Activated T-helper 2 cell treated with anti-CD3 and anti-CD28 coated beads, Interferon-gamma antibody, Interleukin-2, Interleukin-4, amounts not matched to agents 10 μg/mL and 5 μg/mL and 100 μg/mL, durations not matched to agents 14 hours and 24 hours and 36 hours (primary cell): ENCODE measurements at regions of chr14 and their contacts with region 1.

Region 1: GRCh38 chr14:24634158-24634557 is at the start of gene GZMB:
- DNase-seq: peak; percentile 59
- H3K4me3 Mint-ChIP-seq: peak within 1 kb of the TSS; percentile 95
- H3K27ac Mint-ChIP-seq: peak within 1 kb of the TSS; percentile 93
- H3K4me1 Mint-ChIP-seq: peaks cover 75% of the 10 kb centered on the region
- H3K27me3 Mint-ChIP-seq: no peaks in the 10 kb centered on the region
- total RNA-seq, gene GZMB: 4,664 and 4,741 TPM in 2 replicates

Region 2: DNA sequence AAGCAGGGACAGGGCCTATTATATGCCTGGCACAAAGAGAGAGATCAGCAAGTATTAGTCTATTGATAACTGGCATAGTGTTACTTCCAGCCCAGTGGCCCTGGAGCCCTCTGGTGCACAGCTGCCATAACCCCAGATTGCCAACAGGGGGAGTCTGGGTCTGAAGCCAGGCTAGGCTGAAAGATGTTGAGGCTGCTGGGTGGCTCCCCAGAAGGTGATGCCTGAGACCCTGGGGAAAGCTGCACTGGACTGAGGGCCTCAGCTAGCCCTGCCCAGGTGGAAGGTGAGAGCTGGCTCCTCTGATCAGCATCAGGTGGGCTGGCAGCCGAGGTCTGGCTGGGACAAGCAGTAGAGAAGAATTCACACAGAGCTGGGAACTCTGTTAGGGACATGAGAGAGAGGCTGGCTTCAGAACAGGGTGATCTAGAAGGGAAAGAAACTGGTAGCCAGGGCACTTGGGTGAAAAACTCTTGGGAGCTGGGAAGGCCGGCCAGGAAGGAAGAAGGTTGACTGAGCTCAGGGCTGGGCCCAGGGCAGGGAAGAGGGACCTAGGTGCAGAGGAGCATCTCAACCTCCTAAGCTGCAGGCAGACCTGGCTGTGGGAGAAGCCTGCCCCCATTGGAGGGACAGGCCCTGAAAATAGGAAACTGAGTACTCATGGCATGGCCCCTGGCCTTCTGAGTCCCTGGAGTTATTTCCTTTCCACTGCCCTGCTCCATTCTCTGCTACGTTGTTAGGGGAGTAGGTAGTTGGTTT is 28.5 kb before region 1 on chr14:
- intact Hi-C with region 1: loop called (anchors 2 kb)
- DNase-seq: peak; percentile 63
- H3K4me3 Mint-ChIP-seq: peak overlapping the region; percentile 74
- H3K27ac Mint-ChIP-seq: peak overlapping the region; percentile 88
- H3K4me1 Mint-ChIP-seq: peaks cover 49% of the 10 kb centered on the region
- H3K27me3 Mint-ChIP-seq: peaks cover 1% of the 10 kb centered on the region

Region 3: DNA sequence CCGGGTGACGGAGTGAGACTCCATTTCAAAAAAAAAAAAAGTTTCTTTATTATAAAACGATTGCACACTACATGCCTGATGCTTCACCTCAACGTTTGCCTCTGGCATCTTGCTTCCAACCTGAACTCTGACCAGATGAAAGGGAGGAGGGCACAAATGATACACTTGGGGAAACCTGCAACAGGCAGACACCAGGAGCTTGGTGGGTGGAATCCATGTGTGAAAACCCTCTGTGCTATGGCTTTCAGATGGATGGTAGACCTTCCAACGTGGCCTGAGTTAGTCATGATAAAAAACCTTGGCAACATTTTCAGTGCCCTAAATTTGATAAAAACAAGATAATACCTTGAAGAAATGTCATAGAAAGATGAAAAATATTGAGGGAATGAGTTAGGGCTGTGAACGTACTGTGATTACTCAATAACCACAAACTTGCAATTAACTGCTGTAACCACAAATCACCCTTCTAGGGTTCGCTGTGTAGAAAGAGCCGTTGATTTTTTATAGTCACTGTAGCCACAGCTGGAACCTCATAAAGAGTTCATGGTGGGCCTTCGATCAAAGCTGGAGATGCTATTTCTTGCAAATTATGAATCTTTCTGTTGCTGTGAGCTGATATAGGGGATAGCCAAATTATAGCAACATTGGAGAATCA is 25.9 kb after region 1 on chr14:
- intact Hi-C with region 1: loop called (anchors 1 kb)
- DNase-seq: no peak
- H3K4me3 Mint-ChIP-seq: peak overlapping the region; percentile 69
- H3K27ac Mint-ChIP-seq: peak overlapping the region; percentile 90
- H3K4me1 Mint-ChIP-seq: peaks cover 68% of the 10 kb centered on the region
- H3K27me3 Mint-ChIP-seq: no peaks in the 10 kb centered on the region

Region 4: DNA sequence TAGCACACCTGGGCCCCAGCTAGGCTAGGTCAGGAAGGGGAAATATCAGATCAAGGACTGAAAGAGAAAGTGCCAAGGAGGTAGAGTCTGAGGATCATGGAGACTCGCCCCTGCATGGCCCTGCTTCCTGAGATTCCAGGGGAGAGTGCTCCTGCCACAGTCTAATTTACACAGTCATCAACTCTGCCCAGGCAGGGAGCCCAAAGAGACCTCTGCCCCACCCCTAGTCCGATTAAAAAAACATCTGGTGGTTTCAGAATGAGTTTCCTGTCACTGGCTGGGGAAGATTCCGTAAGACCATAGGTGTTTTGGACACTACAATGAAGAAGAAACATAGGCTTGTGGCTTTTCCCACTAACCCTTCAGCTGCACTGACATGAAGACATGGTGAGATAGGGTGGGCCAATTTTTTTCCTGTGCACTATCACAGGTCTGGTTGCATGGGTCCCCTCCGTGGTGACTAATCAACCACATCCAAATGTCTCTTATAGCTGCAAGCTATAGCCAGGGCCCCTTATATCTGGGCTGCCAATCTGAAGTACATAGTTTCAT is 31.4 kb after region 1 on chr14:
- intact Hi-C with region 1: loop called (anchors 1 kb)
- DNase-seq: peak; percentile 52
- H3K4me3 Mint-ChIP-seq: peak overlapping the region; percentile 59
- H3K27ac Mint-ChIP-seq: peak overlapping the region; percentile 93
- H3K4me1 Mint-ChIP-seq: peaks cover 85% of the 10 kb centered on the region
- H3K27me3 Mint-ChIP-seq: no peaks in the 10 kb centered on the region

Region 5: DNA sequence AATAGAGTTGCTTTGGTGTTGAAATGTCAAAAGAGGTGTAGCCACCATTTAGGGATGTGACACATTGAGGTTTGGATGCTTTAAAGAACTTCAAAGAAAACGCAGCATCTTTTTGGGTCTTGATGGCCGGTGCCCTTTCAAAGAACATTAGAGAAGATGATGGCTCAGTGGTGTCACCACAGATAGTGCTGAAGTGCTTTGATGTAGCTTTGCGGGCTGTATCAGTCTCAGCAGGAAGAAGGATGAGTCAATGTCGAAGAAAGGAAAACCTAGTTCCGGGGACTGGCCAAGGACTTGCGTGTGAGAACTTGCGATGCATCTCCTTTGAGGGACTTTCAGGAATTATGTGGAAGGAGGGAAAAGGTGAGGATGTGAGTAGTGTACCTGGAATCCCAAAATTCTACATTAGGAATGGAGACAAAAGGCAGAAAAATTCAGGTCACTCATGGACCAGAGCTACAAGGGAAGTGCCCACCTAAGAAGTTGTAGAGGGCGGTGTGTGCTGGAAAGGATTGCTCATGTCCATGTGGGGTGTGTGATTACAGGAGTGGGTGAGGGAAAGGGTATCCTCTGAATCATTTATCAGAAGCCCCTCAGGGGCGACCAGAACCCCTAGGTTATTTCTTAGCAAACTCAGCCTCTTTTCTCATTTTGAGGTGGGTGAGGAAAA is 39.5 kb after region 1 on chr14:
- intact Hi-C with region 1: loop called (anchors 1 kb)
- DNase-seq: peak; percentile 75
- H3K4me3 Mint-ChIP-seq: peak overlapping the region; percentile 73
- H3K27ac Mint-ChIP-seq: peak overlapping the region; percentile 97
- H3K4me1 Mint-ChIP-seq: peaks cover 78% of the 10 kb centered on the region
- H3K27me3 Mint-ChIP-seq: no peaks in the 10 kb centered on the region